MCF 10A (cell line): ENCODE measurements at regions of chr3 and their contacts with region 1.

Region 1: DNA sequence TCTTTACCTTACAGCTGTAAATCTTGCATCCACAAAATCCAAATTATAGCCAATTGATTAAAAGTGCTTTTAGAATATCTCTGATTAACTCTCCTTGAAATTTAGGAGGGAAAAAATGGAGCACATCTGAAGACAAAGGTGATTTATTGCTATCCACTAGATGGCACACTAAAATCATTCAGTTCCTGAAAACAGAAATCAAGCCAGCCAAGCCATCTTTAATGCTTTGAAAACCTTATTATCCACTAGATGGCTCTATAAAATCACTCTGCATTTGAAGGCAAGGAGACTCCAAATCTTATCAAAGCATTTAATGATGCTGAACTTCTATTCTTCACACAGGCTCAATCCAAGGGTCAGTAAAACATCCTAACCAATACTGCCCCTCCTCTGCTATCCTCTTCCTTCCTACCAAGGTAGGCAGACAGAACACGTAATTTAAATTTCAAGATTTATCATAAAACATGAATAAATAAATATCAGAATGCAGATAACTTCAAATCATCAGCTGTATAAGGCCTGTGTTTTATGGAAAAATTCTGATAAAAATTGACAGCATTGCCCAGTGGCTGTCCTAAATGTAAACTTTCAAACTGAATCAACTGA is 48.4 kb downstream of the GOLIM4 start:
- DNase-seq: peak; percentile 81
- H3K4me3 Mint-ChIP-seq: no peak overlapping the region
- H3K27ac Mint-ChIP-seq: no peak overlapping the region
- H3K4me1 Mint-ChIP-seq: peaks cover 15% of the 10 kb centered on the region
- H3K27me3 Mint-ChIP-seq: no peaks in the 10 kb centered on the region
- CTCF ChIP-seq: peak; percentile 85

Region 2: GRCh38 chr3:168034152-168034928 is 13.0 kb before region 1 on chr3:
- CTCF ChIA-PET with region 1: interaction called, 58 read pairs
- POLR2A ChIA-PET with region 1: no interaction called
- intact Hi-C with region 1: no loop called
- DNase-seq: peak; percentile 40
- H3K4me3 Mint-ChIP-seq: no peak overlapping the region
- H3K27ac Mint-ChIP-seq: no peak overlapping the region
- H3K4me1 Mint-ChIP-seq: no peaks in the 10 kb centered on the region
- H3K27me3 Mint-ChIP-seq: no peaks in the 10 kb centered on the region
- CTCF ChIP-seq: no peak

Region 3: GRCh38 chr3:168061332-168061996 is 14.2 kb after region 1 on chr3:
- CTCF ChIA-PET with region 1: interaction called, 17 read pairs
- POLR2A ChIA-PET with region 1: interaction called, 4 read pairs
- intact Hi-C with region 1: no loop called
- DNase-seq: no peak
- H3K4me3 Mint-ChIP-seq: no peak overlapping the region
- H3K27ac Mint-ChIP-seq: no peak overlapping the region
- H3K4me1 Mint-ChIP-seq: peaks cover 20% of the 10 kb centered on the region
- H3K27me3 Mint-ChIP-seq: no peaks in the 10 kb centered on the region
- CTCF ChIP-seq: no peak